Dendritic cell treated with granulocyte-macrophage colony-stimulating factor and Interleukin-4, amounts not matched to agents 40 ng/mL and 50 ng/mL, for 4 days (primary cell): ENCODE measurements at regions of chr5 and their contacts with region 1.

Region 1: DNA sequence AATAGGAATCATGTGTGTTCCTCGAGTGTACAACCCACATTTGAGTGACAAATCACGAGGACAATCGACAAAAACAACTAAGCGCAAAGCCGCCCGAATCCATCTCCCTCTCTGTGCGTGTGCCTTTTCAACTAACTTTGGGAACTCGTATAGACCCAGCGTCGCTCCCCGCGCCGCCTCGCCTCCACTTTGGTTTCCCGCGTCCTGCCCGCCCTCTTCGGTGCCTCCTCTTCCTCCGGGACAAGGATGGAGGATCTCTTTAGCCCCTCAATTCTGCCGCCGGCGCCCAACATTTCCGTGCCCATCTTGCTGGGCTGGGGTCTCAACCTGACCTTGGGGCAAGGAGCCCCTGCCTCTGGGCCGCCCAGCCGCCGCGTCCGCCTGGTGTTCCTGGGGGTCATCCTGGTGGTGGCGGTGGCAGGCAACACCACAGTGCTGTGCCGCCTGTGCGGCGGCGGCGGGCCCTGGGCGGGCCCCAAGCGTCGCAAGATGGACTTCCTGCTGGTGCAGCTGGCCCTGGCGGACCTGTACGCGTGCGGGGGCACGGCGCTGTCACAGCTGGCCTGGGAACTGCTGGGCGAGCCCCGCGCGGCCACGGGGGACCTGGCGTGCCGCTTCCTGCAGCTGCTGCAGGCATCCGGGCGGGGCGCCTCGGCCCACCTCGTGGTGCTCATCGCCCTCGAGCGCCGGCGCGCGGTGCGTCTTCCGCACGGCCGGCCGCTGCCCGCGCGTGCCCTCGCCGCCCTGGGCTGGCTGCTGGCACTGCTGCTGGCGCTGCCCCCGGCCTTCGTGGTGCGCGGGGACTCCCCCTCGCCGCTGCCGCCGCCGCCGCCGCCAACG is at the start of gene GPR150:
- H3K4me3 Mint-ChIP-seq: peak within 1 kb of the TSS; percentile 73
- H3K27ac Mint-ChIP-seq: peak within 1 kb of the TSS; percentile 71
- H3K4me1 Mint-ChIP-seq: peaks cover 38% of the 10 kb centered on the region
- H3K27me3 Mint-ChIP-seq: peaks cover 41% of the 10 kb centered on the region

Region 2: GRCh38 chr5:95554647-95555548 is 65.4 kb before region 1 on chr5 and contains the starts of genes ARSK and SKIC3:
- intact Hi-C with region 1: loop called (anchors 5 kb)
- H3K4me3 Mint-ChIP-seq: peak within 1 kb of the TSS; percentile 83
- H3K27ac Mint-ChIP-seq: peak within 1 kb of the TSS; percentile 85
- H3K4me1 Mint-ChIP-seq: peaks cover 23% of the 10 kb centered on the region
- H3K27me3 Mint-ChIP-seq: no peaks in the 10 kb centered on the region